Heart right ventricle (tissue), 16 donors: ENCODE measurements at regions of chr15 and their contacts with region 1.

Region 1: GRCh38 chr15:60592371-60593169 is 113.6 kb upstream of the ICE2 start:
- DNase-seq: peak; percentile 87 to 88
- ATAC-seq: peak; percentile 91 to 95 (median 94)
- H3K4me3 ChIP-seq: peak overlapping the region; percentile 69 to 98 (median 88)
- H3K27ac ChIP-seq: peak overlapping the region; percentile 84 to 96 (median 94)
- H3K4me1 ChIP-seq: peaks cover 0 to 29% (median 11%) of the 10 kb centered on the region in 9 donors
- H3K27me3 ChIP-seq: peaks cover 0 to 49% (median 0%) of the 10 kb centered on the region in 7 donors
- CTCF ChIP-seq: peak in 5 of 9 donors; percentile 11 to 36 (median 23)

Region 2: GRCh38 chr15:60660290-60661051 is 67.9 kb after region 1 on chr15:
- intact Hi-C with region 1: loop called in 1 of 10 experiments (anchors 2 kb)
- DNase-seq: peak in 1 of 2 donors; percentile 49
- ATAC-seq: peak in 7 of 8 donors; percentile 69 to 89 (median 82)
- H3K4me3 ChIP-seq: no peak overlapping the region
- H3K27ac ChIP-seq: peak overlapping the region in 6 of 10 donors; percentile 4 to 75 (median 53)
- H3K4me1 ChIP-seq: peaks cover 0 to 35% (median 15%) of the 10 kb centered on the region in 9 donors
- H3K27me3 ChIP-seq: no peaks in the 10 kb centered on the region
- CTCF ChIP-seq: no peak

Region 3: DNA sequence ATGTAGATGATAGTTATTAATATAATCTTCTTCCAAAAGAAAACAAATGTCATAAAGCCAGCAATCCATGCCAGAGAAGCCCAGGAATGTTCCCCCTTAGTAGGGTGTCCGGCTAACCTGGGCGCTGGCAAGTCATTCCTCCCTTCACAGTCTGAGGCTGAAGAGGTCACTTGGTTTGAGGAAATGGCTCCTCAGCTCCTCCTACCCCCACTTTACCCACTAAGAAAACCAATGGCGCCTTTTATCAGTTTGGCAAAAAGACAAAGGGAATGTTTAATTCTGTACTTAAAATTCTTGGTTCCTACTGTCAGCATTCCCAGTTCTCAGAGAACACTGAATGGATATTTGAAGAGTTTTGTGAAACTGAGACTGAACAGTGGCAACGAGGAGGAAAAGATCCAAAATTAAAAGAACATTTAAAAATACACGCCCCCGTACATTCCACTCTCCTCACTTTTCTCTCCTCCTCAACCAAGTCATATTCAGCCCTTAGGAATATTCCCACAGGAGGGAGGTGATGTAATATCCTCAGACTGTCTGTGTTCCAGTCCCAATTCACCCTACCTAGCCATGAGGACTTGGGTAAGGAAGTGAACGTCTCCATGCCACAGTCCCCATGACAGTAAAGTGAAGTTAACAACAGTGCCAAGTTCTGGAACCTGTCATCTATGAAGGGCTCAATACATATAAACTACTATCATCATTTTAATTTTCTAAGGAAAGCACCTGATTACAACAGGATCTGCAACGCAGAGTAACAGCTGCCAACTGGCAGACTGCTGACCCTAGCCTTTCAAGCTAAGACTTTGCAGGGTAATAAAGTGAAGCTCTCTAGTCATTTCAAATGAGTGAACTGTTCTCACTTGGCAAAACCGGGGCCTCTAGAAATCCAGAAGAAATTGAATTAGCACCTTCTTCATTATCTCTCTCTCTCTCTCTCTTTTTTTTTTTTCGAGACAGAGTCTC is 120.8 kb after region 1 on chr15:
- intact Hi-C with region 1: loop called in 1 of 10 experiments (anchors 10 kb)
- DNase-seq: peak in 1 of 2 donors; percentile 15
- ATAC-seq: peak in 7 of 8 donors; percentile 45 to 95 (median 89)
- H3K4me3 ChIP-seq: no peak overlapping the region
- H3K27ac ChIP-seq: peak overlapping the region in 7 of 10 donors; percentile 29 to 69 (median 61)
- H3K4me1 ChIP-seq: peaks cover 0 to 29% (median 13%) of the 10 kb centered on the region in 9 donors
- H3K27me3 ChIP-seq: no peaks in the 10 kb centered on the region
- CTCF ChIP-seq: no peak

Region 4: GRCh38 chr15:60751985-60752952 is 159.7 kb after region 1 on chr15:
- intact Hi-C with region 1: loop called in 2 of 10 experiments (anchors 5 to 10 kb)
- DNase-seq: peak; percentile 20 to 49
- ATAC-seq: peak; percentile 80 to 96 (median 93)
- H3K4me3 ChIP-seq: peak overlapping the region in 8 of 10 donors; percentile 16 to 37 (median 30)
- H3K27ac ChIP-seq: peak overlapping the region; percentile 7 to 82 (median 48)
- H3K4me1 ChIP-seq: peaks cover 0 to 23% (median 10%) of the 10 kb centered on the region in 9 donors
- H3K27me3 ChIP-seq: no peaks in the 10 kb centered on the region
- CTCF ChIP-seq: no peak

Region 5: DNA sequence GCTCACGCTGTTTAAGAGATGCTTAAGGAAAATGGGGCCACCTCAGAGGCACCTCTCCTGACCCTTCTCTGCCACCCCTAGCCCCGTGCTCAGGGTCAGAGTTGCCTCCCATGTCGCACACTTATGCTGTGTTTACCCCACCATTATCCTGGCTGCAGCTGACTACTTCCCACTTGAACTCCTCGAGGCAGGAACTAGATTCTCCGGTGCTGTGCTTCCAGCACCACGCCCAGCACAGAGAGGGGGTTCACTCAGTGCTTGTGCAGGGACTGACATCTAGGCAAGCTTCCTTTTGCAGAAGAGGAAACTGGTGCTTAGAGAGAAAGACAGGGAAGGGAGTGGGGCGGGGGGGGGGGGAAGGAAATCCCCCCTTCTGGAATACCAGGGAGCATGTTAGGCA is 296.4 kb after region 1 on chr15:
- intact Hi-C with region 1: no loop called
- DNase-seq: no peak
- ATAC-seq: peak in 3 of 8 donors; percentile 42 to 53 (median 49)
- H3K4me3 ChIP-seq: no peak overlapping the region
- H3K27ac ChIP-seq: no peak overlapping the region
- H3K4me1 ChIP-seq: peaks cover 0 to 6% (median 0%) of the 10 kb centered on the region in 9 donors
- H3K27me3 ChIP-seq: no peaks in the 10 kb centered on the region
- CTCF ChIP-seq: no peak

Region 6: DNA sequence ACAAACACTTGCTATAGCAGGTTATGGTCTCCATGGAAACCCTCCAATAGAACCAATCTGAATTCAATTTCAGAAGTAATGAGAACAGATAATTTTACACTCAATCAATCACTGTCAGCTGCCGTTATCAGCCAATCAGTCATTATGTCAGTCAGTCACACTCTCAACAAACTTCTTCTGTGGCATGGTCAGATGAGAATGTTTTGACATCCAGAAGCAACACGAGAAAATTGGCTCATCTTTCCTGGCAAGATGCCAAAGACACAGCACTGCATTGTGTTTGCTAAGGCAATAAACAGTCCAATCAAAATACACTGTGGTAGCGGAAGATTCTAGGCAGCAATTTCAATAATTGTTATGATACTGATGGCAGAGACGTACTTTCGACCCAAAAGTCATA is 445.8 kb after region 1 on chr15:
- intact Hi-C with region 1: loop called in 1 of 10 experiments (anchors 10 kb)
- DNase-seq: peak in 1 of 2 donors; percentile 38
- ATAC-seq: peak in 1 of 8 donors; percentile 36
- H3K4me3 ChIP-seq: no peak overlapping the region
- H3K27ac ChIP-seq: no peak overlapping the region
- H3K4me1 ChIP-seq: peaks cover 0 to 47% (median 35%) of the 10 kb centered on the region in 9 donors
- H3K27me3 ChIP-seq: no peaks in the 10 kb centered on the region
- CTCF ChIP-seq: no peak

Region 7: GRCh38 chr15:61051569-61052031 is 459.0 kb after region 1 on chr15:
- intact Hi-C with region 1: loop called in 8 of 10 experiments (anchors 2 to 10 kb)
- DNase-seq: peak; percentile 14 to 49
- ATAC-seq: peak; percentile 85 to 95 (median 90)
- H3K4me3 ChIP-seq: no peak overlapping the region
- H3K27ac ChIP-seq: no peak overlapping the region
- H3K4me1 ChIP-seq: peaks cover 0 to 15% (median 10%) of the 10 kb centered on the region in 9 donors
- H3K27me3 ChIP-seq: no peaks in the 10 kb centered on the region
- CTCF ChIP-seq: peak; percentile 43 to 78 (median 65)